ENCODE measurements at regions of chr2 and their contacts with region 1.

Region 1: DNA sequence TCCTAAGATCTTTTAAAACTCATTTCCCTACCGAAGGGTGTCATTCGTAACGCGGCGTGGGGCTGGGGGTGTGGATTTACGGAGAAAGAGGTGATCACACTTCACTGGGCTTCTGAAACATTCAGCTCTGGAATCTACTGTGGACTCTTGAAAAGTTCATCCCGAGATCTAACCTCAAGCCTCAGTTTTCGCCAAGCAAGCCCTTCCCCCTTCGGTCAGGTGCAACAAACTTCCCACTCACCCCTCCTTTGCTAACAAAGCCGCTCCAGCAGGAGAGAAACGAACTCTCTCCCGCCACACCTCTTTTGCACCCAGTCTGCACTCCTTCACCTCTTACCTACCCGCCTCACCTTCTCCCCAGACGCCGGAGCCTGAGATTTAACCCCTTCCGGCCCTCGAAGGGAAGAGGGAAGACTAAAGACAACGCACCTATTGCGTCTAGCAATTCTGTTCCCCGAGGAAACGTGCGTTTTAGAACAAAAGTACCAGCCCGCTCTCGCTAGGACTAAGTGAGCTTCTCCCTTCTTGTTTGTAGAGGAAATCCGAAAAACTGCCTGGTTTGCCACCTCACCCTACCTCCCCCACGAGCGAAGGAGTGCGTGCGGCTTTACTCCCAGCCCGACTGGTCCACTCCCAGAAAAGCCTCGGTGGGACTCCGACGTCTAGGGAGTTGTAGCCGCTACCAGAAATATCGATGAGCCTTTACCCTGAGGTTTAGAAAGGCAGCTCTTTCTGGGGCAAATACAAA is 538 bp upstream of the PEX13 start:
- DNase-seq: peak; percentile 85
- H3K4me3 ChIP-seq: peak overlapping the region; percentile 89
- H3K27ac ChIP-seq: peak overlapping the region; percentile 87
- H3K4me1 ChIP-seq: peaks cover 22% of the 10 kb centered on the region
- CTCF ChIP-seq: no peak

Region 2: GRCh38 chr2:60991644-60992043 is 25.3 kb before region 1 on chr2:
- CTCF ChIA-PET with region 1: no interaction called
- POLR2A ChIA-PET with region 1: no interaction called
- intact Hi-C with region 1: no loop called
- DNase-seq: no peak
- H3K4me3 ChIP-seq: no peak overlapping the region
- H3K27ac ChIP-seq: no peak overlapping the region
- H3K4me1 ChIP-seq: peaks cover 52% of the 10 kb centered on the region
- CTCF ChIP-seq: no peak

Region 3: DNA sequence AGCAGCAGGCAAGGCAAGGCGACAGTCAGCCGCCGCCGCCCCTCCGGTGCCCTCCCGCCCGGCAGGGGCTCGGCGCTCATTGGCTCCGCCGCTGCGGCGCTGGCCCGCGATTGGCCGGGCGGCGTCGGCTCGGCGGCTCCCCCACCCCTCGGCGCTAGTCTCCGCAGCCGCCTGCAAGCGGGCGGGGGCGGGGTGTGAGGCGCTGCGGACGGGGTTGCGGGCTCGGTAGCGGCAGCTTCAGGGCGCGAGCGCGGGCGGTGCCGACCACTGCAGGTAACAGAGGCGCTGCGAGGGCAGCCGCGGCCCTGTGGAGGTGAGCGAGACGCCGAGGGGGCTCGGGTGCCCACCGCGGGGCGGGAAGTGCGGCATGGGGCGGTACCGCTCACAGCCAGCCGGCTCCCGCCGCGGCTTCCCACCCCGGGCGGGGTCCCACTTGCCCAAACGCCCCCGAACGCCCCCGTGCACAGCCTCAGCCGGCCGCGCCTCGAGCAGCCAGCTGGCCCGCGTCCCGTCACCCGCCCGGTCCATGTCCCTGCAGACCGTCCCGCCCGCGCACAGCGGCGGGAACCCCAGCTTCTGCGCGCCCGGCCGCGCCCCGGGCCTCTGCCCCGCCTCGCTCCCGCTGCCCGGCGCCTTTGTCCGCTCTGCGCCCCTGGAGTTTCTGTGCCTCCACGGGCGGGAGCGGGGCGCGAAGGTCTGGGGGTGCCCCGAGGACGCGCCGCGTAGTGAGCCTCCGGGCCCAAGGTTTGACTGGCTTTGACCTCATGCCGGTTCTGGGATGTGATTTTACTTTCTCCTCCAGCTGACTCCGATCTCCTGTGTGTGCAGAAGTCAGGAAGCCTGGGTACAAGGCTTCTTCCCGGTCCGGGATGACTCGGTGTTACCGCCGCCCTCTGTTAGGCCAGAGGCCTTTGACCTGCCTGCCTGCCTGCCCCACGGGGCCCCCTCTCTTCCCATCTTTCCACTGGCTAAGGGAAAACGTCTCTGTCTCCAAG is 49.0 kb after region 1 on chr2 and contains the start of gene SANBR:
- CTCF ChIA-PET with region 1: no interaction called
- POLR2A ChIA-PET with region 1: no interaction called
- intact Hi-C with region 1: loop called (anchors 1 kb)
- DNase-seq: peak; percentile 91
- H3K4me3 ChIP-seq: peak within 1 kb of the TSS; percentile 80
- H3K27ac ChIP-seq: peak within 1 kb of the TSS; percentile 31
- H3K4me1 ChIP-seq: peaks cover 13% of the 10 kb centered on the region
- CTCF ChIP-seq: no peak
- total RNA-seq, gene SANBR: 7.9 and 8.3 TPM in 2 replicates

Region 4: DNA sequence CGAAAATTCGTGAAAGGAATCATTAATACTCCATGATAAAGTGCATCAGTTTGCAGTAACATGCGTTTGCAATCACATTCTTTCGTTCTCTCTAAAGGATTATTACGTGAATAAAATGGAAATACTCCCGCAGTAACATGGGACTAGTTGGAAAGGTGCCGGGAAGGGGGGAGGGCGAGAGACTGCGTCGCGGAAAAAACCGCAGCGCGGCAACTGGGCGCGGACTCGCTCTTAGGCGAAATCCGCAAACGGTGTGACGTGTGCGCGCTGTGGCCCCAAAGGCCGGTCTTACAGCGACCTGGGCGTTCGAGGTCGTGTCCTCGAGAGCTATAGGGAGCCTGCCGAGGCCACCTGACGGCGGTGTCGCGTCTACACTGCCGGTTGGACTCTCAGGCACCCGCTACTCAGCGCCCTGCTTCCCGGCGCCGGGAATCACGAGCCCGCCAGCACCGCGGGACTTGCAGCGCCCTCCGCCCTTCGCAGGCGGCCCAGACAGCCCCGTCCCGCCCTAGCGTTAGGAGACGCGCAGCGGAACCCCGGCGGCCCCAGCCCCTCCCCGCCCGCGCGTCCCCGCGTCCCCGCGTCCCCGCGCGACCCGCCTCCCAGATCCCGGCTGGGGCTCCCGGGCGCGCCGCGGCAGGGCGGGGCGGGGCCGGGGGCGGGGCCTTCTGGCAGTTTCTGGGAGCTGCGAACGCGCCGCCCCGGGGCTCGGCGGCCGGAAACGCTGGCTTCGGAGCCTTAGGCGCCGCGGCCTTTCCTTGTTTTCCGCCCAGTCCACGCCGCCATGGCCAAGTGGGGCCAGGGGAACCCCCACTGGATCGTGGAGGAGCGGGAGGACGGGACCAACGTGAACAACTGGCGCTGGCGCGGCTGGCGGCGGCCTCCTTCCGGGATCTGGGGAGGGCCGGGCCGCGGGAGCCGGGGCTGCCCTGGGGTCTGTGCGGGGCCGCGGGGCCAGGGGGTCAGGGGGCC is 160.1 kb after region 1 on chr2:
- CTCF ChIA-PET with region 1: no interaction called
- POLR2A ChIA-PET with region 1: interaction called, 3 read pairs
- intact Hi-C with region 1: loop called (anchors 2 kb)
- DNase-seq: peak; percentile 93
- H3K4me3 ChIP-seq: peak overlapping the region; percentile 91
- H3K27ac ChIP-seq: peak overlapping the region; percentile 46
- H3K4me1 ChIP-seq: peaks cover 32% of the 10 kb centered on the region
- CTCF ChIP-seq: peak; percentile 24; the same call in 1 of the 2 replicates

Measured in OCI-LY7 (cell line).